Spleen (tissue), 13 donors: ENCODE measurements at regions of chr22 and their contacts with region 1.

Region 1: GRCh38 chr22:19970479-19971275 is 29.1 kb upstream of the TXNRD2 start:
- DNase-seq: peak; percentile 93
- H3K4me3 ChIP-seq: no peak overlapping the region
- H3K27ac ChIP-seq: peak overlapping the region in 4 of 8 donors; percentile 22 to 58 (median 40)
- H3K4me1 ChIP-seq: peaks cover 0 to 80% (median 28%) of the 10 kb centered on the region in 6 donors
- H3K27me3 ChIP-seq: no peaks in the 10 kb centered on the region
- CTCF ChIP-seq: peak; percentile 82 to 98 (median 92)
- POLR2A ChIP-seq: no peak

Region 2: DNA sequence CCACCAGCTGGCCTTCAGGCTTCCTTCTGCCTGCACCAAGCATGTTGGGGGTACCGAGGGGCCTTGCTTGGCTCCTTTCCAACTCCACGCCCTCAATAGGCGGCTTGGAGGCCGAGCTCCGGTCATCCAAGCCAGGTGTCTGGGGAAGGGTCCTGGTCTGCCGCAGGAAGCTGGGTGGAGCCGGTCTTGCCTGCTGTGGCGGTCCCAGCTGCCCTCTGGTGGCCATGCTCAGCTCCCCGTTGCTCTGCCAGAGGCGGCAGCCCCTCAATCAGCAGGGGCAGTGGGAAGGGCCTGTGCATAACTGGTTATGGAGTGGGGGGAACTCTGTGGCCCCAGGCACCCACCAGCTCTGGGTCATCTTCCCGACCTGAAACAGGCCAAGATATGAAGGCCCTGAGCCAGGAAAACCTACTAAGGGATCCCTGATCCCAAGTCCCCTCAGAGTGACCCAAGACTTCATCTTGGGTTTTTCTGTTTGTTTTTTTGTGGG is 42.8 kb after region 1 on chr22:
- intact Hi-C with region 1: loop called (anchors 5 kb)
- DNase-seq: peak; percentile 86
- H3K4me3 ChIP-seq: no peak overlapping the region
- H3K27ac ChIP-seq: peak overlapping the region in 5 of 8 donors; percentile 5 to 71 (median 20)
- H3K4me1 ChIP-seq: peaks cover 9 to 81% (median 48%) of the 10 kb centered on the region in 6 donors
- H3K27me3 ChIP-seq: peaks cover 0 to 33% (median 0%) of the 10 kb centered on the region in 7 donors
- CTCF ChIP-seq: peak; percentile 47 to 82 (median 73)
- POLR2A ChIP-seq: no peak

Region 3: DNA sequence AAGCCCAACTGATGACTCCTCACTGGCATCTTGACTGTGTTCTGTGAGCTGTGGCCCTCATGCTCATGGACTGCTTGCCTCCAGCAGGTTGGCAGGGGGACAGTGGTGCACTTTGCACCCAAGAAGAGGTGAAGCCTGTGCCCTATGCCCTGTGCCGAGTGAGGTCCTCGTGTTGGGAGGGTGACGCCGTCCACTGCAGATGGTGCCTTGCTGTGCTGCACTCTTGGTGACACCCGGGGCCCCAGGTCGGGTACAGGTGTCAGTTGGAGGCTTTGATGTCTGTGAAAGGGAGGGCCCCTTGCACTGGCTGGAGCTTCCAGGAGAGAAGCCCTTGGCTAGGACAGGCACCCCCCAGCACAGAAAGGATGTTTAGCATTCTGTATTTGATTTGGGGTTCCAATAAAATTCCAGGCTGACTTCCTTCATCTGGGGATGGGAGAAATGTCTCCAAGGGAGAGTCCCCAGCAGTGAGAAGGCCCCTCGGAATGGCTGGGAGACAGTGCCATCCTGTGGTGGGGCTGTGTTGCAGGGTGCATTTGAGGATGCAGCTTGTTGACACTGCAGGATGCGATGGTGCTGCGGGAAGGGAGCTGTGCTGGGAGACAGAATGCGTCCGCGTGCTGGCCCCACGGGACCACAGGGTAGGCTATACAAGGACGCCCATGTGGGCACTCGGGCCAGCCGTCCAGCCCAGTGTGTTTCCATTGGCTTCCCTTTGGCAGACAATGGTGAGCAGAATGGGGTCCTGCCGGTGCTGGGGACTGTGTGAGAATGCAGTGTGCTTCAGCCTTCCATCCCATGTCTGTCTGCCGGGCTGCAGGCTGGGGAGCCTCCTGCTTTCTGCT is 158.4 kb after region 1 on chr22:
- intact Hi-C with region 1: loop called (anchors 10 kb)
- DNase-seq: no peak
- H3K4me3 ChIP-seq: no peak overlapping the region
- H3K27ac ChIP-seq: peak overlapping the region in 3 of 8 donors; percentile 11 to 47 (median 28)
- H3K4me1 ChIP-seq: peaks cover 13 to 71% (median 39%) of the 10 kb centered on the region in 6 donors
- H3K27me3 ChIP-seq: no peaks in the 10 kb centered on the region
- CTCF ChIP-seq: peak in 8 of 11 experiments; percentile 6 to 57 (median 42)
- POLR2A ChIP-seq: no peak